MCF 10A (cell line): ENCODE measurements at regions of chr6 and their contacts with region 1.

Region 1: GRCh38 chr6:6856538-6857523 is 250.9 kb upstream of the RREB1 start:
- DNase-seq: peak; percentile 99
- H3K4me3 Mint-ChIP-seq: peak overlapping the region; percentile 61
- H3K27ac Mint-ChIP-seq: peak overlapping the region; percentile 90
- H3K4me1 Mint-ChIP-seq: peaks cover 31% of the 10 kb centered on the region
- H3K27me3 Mint-ChIP-seq: no peaks in the 10 kb centered on the region
- CTCF ChIP-seq: no peak

Region 2: GRCh38 chr6:6781172-6781871 is 75.5 kb before region 1 on chr6:
- CTCF ChIA-PET with region 1: no interaction called
- POLR2A ChIA-PET with region 1: interaction called, 10 read pairs
- intact Hi-C with region 1: no loop called
- DNase-seq: peak; percentile 95
- H3K4me3 Mint-ChIP-seq: peak overlapping the region; percentile 36
- H3K27ac Mint-ChIP-seq: no peak overlapping the region
- H3K4me1 Mint-ChIP-seq: peaks cover 23% of the 10 kb centered on the region
- H3K27me3 Mint-ChIP-seq: no peaks in the 10 kb centered on the region
- CTCF ChIP-seq: no peak

Region 3: DNA sequence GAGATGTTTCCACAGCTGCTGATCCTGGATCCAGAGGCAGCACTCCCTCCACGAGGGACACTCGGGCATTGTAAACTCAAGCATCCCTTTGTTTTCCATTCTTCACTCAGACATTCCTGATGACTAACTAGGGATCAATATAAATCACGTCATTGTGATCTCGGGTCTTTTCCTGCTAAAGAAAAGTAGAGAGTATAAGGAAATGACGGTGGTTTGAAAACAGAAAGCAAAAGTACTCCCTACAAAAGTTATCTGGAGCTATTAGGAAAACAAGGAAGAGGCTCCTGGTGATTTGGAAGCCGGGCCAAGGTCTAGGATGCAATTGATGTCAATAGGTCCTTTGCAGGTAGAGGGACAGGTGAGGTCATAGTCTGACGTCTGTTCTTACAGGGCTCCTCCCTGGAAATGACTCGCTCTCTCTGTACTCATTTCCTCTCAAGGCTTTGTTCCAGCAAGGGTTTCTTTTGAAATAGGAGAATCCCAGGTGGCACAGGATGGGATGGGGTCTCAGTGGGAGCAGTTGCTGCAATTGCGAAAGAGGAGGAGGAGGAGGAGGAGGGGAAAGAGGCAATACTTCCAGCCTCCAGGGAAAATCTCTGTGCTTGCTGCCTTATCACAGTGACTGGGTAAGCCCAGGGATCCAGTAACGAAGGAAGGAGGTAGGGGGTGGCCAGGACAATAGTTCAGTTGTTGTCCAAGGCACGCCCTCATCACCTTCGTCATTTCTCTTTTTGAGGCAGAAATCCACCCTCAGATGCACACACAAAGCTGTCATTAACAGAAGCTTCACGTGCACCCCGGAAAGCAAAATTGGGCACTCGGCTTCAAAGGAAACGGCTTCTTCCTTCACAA is 45.5 kb before region 1 on chr6:
- CTCF ChIA-PET with region 1: no interaction called
- POLR2A ChIA-PET with region 1: interaction called, 31 read pairs
- intact Hi-C with region 1: no loop called
- DNase-seq: peak; percentile 98
- H3K4me3 Mint-ChIP-seq: peak overlapping the region; percentile 48
- H3K27ac Mint-ChIP-seq: peak overlapping the region; percentile 80
- H3K4me1 Mint-ChIP-seq: peaks cover 28% of the 10 kb centered on the region
- H3K27me3 Mint-ChIP-seq: no peaks in the 10 kb centered on the region
- CTCF ChIP-seq: no peak

Region 4: GRCh38 chr6:6826095-6826901 is 30.5 kb before region 1 on chr6:
- CTCF ChIA-PET with region 1: interaction called, 4 read pairs
- POLR2A ChIA-PET with region 1: interaction called, 24 read pairs
- intact Hi-C with region 1: no loop called
- DNase-seq: peak; percentile 81
- H3K4me3 Mint-ChIP-seq: no peak overlapping the region
- H3K27ac Mint-ChIP-seq: peak overlapping the region; percentile 92
- H3K4me1 Mint-ChIP-seq: peaks cover 40% of the 10 kb centered on the region
- H3K27me3 Mint-ChIP-seq: no peaks in the 10 kb centered on the region
- CTCF ChIP-seq: no peak

Region 5: GRCh38 chr6:6875814-6876470 is 19.1 kb after region 1 on chr6:
- CTCF ChIA-PET with region 1: no interaction called
- POLR2A ChIA-PET with region 1: interaction called, 12 read pairs
- intact Hi-C with region 1: no loop called
- DNase-seq: peak; percentile 78
- H3K4me3 Mint-ChIP-seq: no peak overlapping the region
- H3K27ac Mint-ChIP-seq: peak overlapping the region; percentile 70
- H3K4me1 Mint-ChIP-seq: peaks cover 21% of the 10 kb centered on the region
- H3K27me3 Mint-ChIP-seq: no peaks in the 10 kb centered on the region
- CTCF ChIP-seq: no peak

Region 6: DNA sequence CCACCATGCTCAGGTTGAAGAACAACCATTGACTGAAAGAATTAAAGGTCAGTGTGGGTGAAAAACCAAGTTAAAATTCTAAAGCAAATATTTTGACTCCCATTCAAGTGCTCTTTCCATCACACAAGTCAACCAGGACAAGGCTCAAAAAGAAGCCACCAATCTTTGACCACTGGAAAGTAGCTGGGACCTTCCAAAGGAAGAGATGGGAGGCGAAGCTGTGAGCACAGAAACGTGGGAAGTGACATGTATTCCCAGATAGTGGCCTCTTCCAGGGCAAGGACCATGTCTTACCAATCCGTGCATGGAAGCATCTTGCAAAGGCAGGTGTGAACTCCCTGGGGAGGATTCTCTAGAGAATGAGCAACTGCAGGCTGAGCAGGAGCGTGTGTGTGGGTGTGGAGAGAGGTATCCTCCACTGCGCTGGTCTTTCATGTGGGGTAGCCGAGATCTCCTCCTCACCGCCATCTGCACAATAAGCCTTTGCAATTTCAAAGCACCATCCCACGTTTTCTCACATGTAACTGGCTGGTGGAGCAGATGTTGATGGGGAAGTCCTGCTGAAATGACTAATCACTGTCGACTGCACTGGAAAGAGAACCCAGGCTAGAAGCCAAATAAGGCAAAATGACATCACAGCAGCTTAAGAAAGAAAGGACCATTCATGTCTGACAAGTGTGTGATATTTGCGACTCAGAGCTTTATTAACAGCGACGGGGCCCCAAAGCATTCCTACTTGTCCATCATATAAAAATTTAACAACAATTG is 61.6 kb after region 1 on chr6:
- CTCF ChIA-PET with region 1: no interaction called
- POLR2A ChIA-PET with region 1: interaction called, 28 read pairs
- intact Hi-C with region 1: no loop called
- DNase-seq: peak; percentile 73
- H3K4me3 Mint-ChIP-seq: no peak overlapping the region
- H3K27ac Mint-ChIP-seq: no peak overlapping the region
- H3K4me1 Mint-ChIP-seq: peaks cover 27% of the 10 kb centered on the region
- H3K27me3 Mint-ChIP-seq: no peaks in the 10 kb centered on the region
- CTCF ChIP-seq: no peak